ENCODE measurements at regions of chr1 and their contacts with region 1.

Region 1: DNA sequence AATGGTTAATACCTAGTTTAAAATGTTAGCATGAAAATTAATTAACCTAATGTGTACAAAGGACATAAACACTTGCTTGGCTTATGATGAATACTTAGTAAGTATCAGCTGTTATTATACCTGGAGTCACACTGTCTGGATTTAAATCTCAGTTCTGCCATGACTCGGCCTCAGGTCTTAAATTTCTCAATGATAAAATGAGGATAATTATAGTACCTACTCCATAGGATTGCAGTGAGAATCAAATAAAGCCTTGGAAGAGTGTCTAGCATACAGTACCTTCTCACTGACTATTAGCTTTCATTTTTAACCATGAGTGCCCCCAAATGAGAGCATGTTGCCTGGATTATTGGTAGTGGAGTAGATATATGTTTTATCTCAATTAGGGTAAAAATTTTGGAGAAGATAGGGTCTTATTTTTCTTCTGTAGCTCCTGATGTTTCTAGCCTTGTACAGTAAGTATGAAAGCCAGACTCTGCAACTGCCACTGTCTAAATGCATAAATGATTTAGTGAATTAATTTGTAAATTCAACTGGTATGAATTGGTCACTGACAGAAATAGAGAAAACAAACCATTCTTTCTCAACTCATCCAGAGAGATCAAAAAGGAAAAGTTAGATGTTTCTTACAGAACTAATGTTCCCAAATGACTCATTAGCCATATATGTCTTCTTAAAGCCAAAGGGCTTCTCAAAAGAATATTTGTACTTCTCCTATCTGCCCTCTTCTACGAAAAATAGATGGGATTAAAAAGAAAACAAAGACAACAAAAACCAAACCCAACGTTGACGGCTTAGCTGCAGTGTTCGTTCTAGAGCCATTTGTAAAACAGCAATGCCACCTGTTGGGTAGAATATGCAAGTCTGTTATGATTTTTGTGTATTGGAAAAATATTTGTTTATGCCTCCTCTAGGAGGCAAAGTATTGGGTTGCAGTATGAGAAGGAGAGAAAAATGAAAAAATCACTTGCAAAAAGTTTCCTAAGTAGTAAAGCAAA is 53.8 kb upstream of the MROH9 start:
- DNase-seq: peak; percentile 23
- ATAC-seq: peak; percentile 76
- H3K4me3 ChIP-seq: no peak overlapping the region
- H3K27ac ChIP-seq: no peak overlapping the region
- H3K4me1 ChIP-seq: no peaks in the 10 kb centered on the region
- H3K27me3 ChIP-seq: no peaks in the 10 kb centered on the region
- CTCF ChIP-seq: peak; percentile 42 to 75 (median 53); a peak in 5 of 6 replicates
- EP300 ChIP-seq: no peak
- POLR2A ChIP-seq: no peak
- RAD21 ChIP-seq: peak; percentile 87

Region 2: DNA sequence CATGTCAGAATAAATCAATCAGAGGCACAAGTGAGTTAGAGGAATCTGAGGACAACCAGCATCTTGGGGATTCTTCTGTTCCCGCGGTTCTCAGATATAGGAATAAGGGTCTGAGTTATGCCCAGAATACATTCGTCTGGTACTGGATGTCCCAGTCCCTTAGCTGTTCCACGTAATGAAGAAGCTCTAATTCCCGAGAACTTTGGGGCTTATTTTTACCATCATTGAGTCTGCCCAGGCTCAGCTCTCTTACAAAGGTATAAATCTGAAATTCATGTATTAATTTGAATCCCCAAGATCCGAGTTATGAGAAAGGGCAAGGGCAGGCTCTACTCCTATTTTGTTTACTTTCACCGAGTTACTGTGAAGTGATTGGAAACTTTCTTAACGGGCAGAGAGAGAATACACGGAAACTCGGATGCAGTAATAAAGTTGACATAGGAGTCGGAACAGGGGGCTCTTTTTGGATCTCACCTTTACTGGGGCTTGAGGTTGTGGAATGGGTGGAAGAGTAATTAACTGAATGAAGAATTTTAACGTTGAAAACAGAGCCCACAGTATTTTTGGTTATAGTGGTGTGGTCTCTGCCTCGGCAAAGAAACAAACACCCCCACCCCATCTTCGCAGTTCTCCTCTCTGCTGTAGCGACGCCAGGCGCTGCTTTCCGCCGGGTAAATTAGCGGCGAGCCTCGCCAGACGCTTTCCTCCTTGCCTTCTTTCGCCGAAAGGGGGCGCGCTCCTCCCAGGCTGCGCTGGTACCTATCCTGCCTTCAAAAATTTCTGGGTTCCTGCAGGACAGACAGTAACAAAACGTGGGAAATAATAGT is 210.6 kb before region 1 on chr1:
- CTCF ChIA-PET with region 1: interaction called, 15 read pairs
- POLR2A ChIA-PET with region 1: interaction called, 4 read pairs
- RAD21 ChIA-PET with region 1: interaction called, 10 read pairs
- SMC1A ChIA-PET with region 1: interaction called, 6 read pairs
- in situ Hi-C with region 1: no loop called
- intact Hi-C with region 1: no loop called
- DNase-seq: no peak
- ATAC-seq: peak; percentile 74
- H3K4me3 ChIP-seq: no peak overlapping the region
- H3K27ac ChIP-seq: no peak overlapping the region
- H3K4me1 ChIP-seq: no peaks in the 10 kb centered on the region
- H3K27me3 ChIP-seq: peaks cover 3 to 13% of the 10 kb centered on the region in 2 experiments; a peak in 3 of 4 replicates
- CTCF ChIP-seq: peak; percentile 54 to 65 (median 55)
- EP300 ChIP-seq: no peak
- POLR2A ChIP-seq: no peak
- RAD21 ChIP-seq: peak; percentile 51

Region 3: GRCh38 chr1:170685166-170685565 is 196.4 kb before region 1 on chr1:
- CTCF ChIA-PET with region 1: interaction called, 99 read pairs
- POLR2A ChIA-PET with region 1: no interaction called
- RAD21 ChIA-PET with region 1: interaction called, 16 read pairs
- SMC1A ChIA-PET with region 1: interaction called, 37 read pairs
- in situ Hi-C with region 1: loop called (anchors 5 kb)
- intact Hi-C with region 1: loop called (anchors 1 kb)
- DNase-seq: no peak
- ATAC-seq: no peak
- H3K4me3 ChIP-seq: no peak overlapping the region
- H3K27ac ChIP-seq: no peak overlapping the region
- H3K4me1 ChIP-seq: no peaks in the 10 kb centered on the region
- H3K27me3 ChIP-seq: no peaks in the 10 kb centered on the region
- CTCF ChIP-seq: no peak
- EP300 ChIP-seq: no peak
- POLR2A ChIP-seq: no peak
- RAD21 ChIP-seq: no peak

Region 4: DNA sequence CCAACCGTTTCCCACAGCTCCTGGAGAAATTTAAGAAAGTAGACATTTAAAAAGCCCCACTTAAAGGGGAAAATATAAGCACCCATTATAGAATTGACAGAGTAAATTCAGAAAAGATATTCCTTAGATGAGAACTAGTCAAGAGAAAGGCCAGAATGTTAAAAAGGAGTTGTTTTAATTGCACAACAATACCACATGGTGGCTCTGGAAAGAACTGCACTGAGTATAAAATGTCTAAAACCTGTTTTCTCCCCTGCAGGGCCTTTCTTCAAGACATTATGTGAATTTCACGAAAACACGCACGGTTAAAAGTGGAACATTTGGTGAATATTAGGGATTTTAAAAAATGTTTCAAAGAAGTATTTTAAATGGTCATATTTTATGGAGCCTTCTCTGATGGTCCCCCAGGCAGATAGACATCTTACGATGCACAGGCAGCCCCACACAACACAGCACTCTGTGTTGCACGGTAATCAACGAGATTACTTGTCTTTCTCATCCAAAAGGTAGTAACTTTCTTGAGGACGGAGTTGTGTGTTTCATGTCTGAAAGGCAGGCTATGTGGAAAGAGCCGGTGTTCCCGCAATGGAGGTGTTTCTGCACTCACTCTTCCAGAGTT is 115.7 kb before region 1 on chr1:
- CTCF ChIA-PET with region 1: interaction called, 6 read pairs
- POLR2A ChIA-PET with region 1: no interaction called
- RAD21 ChIA-PET with region 1: interaction called, 4 read pairs
- SMC1A ChIA-PET with region 1: interaction called, 5 read pairs
- in situ Hi-C with region 1: no loop called
- intact Hi-C with region 1: loop called (anchors 2 kb)
- DNase-seq: no peak
- ATAC-seq: peak; percentile 63; the same call in 2 of the 3 replicates
- H3K4me3 ChIP-seq: no peak overlapping the region
- H3K27ac ChIP-seq: no peak overlapping the region
- H3K4me1 ChIP-seq: no peaks in the 10 kb centered on the region
- H3K27me3 ChIP-seq: no peaks in the 10 kb centered on the region
- CTCF ChIP-seq: peak in 1 of 3 experiments; percentile 48; a peak in 1 of 6 replicates
- EP300 ChIP-seq: no peak
- POLR2A ChIP-seq: no peak
- RAD21 ChIP-seq: 0 out of 2 replicates have a peak, but pooled peaks have one; percentile 32

Region 5: DNA sequence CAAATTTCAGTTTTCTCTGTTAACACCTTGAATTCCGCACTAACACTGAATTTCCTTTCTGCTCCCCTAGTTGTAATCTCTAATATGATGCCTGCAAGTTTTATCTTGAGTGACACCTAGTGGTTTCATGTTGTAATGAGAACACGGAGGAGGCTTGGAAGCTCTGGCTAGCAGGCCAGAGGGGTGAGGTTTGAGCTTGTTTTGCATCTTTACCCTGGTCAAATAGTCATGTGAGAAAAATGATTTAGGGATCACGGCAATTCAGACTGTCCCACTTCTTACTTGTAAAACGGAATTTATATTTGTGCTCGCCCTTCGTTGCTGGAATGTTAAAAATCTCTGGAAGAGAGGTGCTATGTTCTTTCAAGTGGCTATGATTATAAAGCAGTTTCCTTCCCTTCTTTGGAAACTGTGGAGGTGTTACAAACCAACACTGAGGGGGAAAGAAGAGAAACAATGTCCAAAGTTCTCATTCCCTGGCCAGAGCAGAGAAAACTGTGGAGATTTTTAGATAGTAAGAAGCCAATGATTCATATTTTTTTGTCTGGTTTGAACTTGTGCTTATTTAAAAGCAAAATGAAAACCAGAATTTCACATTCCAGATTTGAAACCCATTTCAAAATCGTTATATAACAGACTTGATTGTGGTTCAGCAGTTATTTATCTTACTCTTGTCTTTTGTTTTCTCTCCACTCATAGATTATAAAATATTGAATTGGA is 48.4 kb after region 1 on chr1:
- CTCF ChIA-PET with region 1: interaction called, 24 read pairs
- POLR2A ChIA-PET with region 1: no interaction called
- RAD21 ChIA-PET with region 1: interaction called, 5 read pairs
- SMC1A ChIA-PET with region 1: interaction called, 4 read pairs
- in situ Hi-C with region 1: no loop called
- intact Hi-C with region 1: no loop called
- DNase-seq: peak; percentile 11
- ATAC-seq: peak; percentile 94
- H3K4me3 ChIP-seq: no peak overlapping the region
- H3K27ac ChIP-seq: no peak overlapping the region
- H3K4me1 ChIP-seq: peaks cover 5% of the 10 kb centered on the region; the same call in 1 of the 2 replicates
- H3K27me3 ChIP-seq: no peaks in the 10 kb centered on the region
- CTCF ChIP-seq: peak; percentile 68 to 73 (median 68)
- EP300 ChIP-seq: no peak
- POLR2A ChIP-seq: no peak
- RAD21 ChIP-seq: peak; percentile 86

Measured in GM12878 (cell line).